AG04449 (cell line): ENCODE measurements at regions of chr10 and their contacts with region 1.

Region 1: GRCh38 chr10:84537447-84537931 is 209.1 kb downstream of the CCSER2 start:
- DNase-seq: no peak
- H3K4me3 ChIP-seq: no peak overlapping the region
- CTCF ChIP-seq: peak; percentile 53

Region 2: GRCh38 chr10:84147347-84147746 is 390.1 kb before region 1 on chr10:
- CTCF ChIA-PET with region 1: interaction called, 49 read pairs
- POLR2A ChIA-PET with region 1: no interaction called
- DNase-seq: no peak
- H3K4me3 ChIP-seq: no peak overlapping the region
- CTCF ChIP-seq: no peak

Region 3: DNA sequence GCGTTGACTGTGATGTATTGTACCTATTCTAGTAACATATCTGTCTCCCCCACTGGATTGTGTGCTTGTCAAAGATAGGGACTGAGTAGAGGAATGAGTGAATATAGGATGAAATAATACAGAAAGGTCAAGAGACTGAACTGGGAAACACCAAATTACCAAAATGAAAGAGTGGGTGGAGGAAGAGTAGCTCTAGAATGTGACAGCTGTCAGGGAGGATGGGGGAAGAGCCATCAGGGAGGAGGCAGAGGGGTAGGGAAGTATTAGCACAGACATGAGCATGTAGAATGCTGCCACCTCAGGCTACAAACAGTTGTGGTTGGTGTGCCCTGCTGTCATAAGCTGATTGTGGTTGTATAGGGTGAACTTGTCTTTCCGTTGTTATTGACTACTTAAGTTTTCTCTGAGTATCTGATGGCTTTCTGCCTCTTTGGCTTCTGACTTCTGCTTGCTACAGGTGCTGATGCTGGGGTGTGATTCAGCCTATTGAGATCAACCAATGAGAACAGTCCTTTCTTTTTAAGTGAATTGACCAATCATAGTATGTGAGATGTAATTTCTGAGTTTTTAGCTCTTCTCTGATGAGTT is 203.5 kb before region 1 on chr10:
- CTCF ChIA-PET with region 1: interaction called, 18 read pairs
- POLR2A ChIA-PET with region 1: no interaction called
- DNase-seq: no peak
- H3K4me3 ChIP-seq: no peak overlapping the region
- CTCF ChIP-seq: no peak

Region 4: DNA sequence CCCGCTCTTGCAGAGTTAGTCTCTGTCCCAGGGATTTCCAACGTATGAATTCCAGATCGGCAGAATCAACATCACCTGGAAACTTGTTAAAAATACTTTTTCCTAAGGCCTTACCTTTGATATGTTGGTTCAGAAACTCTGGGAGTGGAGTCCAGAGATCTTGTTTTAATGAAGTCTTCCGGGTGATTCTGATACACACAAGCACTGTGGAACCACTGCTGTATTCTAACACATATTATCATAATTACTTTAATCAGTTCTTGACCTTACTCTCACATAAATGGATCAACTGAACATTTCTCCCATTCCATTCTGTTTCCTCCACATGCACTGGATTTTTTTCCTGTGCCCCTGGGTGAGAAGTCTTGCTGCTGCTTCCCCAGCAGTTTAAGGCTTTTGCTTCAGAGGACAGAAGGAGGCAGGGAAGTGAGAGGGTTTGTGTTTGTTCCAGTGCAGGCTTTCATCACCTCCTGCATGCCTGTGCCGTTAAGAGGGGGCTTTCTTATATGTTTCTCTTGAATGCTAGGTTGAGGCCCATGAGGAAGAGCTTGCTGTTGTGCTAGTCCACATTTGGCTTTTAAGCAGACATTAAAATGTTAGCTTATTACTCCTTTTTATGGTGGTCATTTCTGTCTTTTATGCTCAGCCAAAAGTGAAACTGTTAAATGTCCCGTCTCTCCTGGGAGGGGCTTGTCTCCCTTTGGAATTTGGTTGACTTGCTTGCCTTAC is 176.7 kb before region 1 on chr10:
- CTCF ChIA-PET with region 1: interaction called, 132 read pairs
- POLR2A ChIA-PET with region 1: no interaction called
- DNase-seq: no peak
- H3K4me3 ChIP-seq: peak overlapping the region; percentile 37
- CTCF ChIP-seq: no peak

Region 5: GRCh38 chr10:84415539-84416244 is 121.8 kb before region 1 on chr10:
- CTCF ChIA-PET with region 1: interaction called, 10 read pairs
- POLR2A ChIA-PET with region 1: no interaction called
- DNase-seq: no peak
- H3K4me3 ChIP-seq: no peak overlapping the region
- CTCF ChIP-seq: no peak

Region 6: DNA sequence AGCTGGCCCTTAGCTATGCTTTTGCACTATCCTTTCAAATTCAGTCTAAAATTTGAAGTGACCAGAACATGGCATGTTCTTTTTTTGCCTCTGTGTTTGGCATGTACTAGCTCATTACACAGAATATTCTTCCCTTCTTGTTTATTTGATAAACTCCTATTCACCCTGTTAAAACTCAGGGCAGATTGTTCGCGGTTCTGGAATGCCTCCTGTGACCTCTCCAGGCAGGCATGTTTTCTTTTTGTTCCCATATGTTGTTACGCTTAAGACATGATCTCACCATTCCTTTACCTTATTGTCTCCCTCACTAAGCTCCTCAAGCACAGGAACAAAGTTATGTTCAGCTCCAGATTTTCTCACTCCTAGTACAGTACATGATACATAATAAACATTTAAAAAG is 27.4 kb before region 1 on chr10:
- CTCF ChIA-PET with region 1: interaction called, 24 read pairs
- POLR2A ChIA-PET with region 1: no interaction called
- DNase-seq: peak; percentile 28
- H3K4me3 ChIP-seq: no peak overlapping the region
- CTCF ChIP-seq: no peak

Region 7: DNA sequence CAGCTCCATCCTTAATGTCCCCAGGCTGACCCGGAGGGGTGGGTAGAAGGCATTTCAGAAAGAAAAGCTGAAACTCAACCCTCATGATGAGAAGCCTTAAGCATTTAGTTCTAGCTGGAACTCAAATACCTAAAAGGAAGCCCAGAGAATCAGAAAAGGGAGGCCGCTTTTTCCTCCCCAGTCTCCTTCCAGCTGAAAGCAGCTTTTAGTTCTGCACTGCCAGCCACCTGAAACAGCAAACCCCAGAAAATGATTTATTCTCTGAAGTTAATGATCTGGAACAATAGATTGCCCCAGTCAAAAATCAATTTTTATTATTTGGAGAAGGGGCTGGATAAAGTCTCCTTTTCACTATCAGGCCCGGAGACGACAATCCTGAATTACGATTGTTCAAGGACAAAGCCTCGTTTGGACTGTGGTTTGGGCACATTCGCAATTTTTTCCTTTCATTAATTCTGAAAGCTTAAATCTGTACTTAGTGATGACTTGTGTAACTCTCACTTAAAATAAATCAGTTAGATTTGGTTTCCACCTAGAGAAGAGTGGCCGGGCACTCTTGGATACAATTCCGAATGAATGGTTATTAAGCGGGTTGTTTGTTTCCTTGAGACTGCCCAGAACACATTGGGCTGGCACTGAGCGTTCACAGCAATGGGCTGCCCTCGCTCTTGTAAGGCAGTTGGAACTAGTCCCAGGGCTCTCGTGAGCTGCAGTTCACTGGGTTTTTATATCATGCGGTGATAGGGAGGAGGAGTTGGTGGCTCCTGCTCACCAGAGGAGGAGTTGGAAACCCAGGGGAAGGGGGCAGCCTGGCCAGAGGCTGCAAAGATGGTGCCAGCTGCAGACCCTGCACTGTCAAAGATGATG is 53.1 kb after region 1 on chr10:
- CTCF ChIA-PET with region 1: no interaction called
- POLR2A ChIA-PET with region 1: no interaction called
- DNase-seq: no peak
- H3K4me3 ChIP-seq: no peak overlapping the region
- CTCF ChIP-seq: no peak

Region 8: DNA sequence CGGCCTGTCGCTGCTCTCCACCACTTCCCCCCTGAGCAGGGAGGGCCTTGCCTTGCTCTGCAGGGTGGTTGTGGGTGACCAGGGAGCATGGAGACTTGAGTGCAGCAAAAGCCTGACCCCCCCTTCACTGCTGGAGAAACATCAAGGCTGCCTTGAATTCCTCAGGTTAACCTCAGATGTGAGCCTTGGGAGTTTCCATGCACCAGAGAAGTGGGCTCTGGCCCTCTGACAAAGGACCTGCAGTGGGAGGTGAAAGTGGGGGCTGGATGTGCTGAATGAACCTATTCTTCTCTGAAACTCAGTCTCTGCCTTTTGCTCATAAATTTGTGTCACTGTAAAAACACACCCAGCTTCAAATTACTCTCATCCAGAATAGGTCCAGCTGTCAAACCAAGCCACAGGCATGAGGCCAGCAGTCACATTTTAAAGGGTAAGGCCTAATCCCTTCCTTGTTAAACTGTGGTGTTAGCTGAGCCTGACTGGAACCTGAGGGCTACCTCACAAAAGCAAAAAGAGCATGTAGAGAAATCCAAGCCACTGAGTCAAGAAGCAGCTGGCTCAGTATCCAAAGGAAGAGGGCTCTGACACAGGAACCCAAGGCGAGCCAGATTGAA is 147.7 kb after region 1 on chr10:
- CTCF ChIA-PET with region 1: no interaction called
- POLR2A ChIA-PET with region 1: no interaction called
- DNase-seq: no peak
- H3K4me3 ChIP-seq: no peak overlapping the region
- CTCF ChIP-seq: no peak

Region 9: GRCh38 chr10:84715911-84716310 is 178.4 kb after region 1 on chr10:
- CTCF ChIA-PET with region 1: interaction called, 15 read pairs
- POLR2A ChIA-PET with region 1: no interaction called
- DNase-seq: no peak
- H3K4me3 ChIP-seq: no peak overlapping the region
- CTCF ChIP-seq: peak; percentile 50

Region 10: GRCh38 chr10:84755311-84755710 is 217.8 kb after region 1 on chr10:
- CTCF ChIA-PET with region 1: no interaction called
- POLR2A ChIA-PET with region 1: no interaction called
- DNase-seq: no peak
- H3K4me3 ChIP-seq: no peak overlapping the region
- CTCF ChIP-seq: no peak